ENCODE measurements at regions of chr4 and their contacts with region 1.

Region 1: DNA sequence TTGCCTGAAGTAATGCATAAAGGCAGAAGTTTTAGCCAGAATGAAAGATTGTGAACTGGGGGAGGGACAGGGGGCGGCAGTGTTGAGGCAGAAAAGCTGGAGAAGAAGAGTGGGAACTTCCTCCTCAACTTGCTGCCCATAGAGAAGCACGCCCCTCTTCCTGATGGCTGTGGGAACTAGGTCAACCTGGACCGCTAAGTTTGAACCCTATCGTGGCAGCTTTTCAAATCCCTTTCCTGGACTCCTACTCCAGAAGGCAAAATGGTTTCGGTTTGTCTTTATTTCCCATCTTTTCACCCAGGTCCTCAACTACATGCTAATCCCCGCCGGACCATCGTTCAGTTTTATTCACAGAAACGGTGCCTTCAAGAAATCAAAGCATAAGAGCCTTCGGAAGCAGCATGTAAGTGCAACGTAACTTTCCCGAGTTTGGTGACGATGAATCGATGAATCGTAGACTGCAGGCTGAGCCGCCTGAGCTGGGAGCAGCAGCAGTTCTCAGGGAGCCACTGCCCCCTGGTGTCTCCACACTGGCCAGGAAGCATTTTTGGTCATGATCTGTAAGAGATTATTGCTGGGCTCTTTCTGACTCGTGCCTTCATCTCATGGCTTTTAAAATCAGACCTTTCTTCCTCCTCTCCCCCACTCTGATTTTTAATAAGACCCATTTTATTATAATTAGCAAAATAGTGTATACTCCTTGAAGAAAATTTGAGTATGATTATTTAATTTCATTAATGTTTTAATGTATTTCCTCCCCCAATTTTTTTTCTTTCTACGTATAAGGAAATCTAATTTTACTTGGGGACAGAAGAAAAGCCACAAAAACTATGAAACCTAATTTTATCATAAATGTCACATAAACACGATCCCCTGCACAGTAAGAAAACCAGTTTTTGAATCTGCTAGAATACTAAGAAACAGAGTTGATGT is 21.4 kb downstream of the SPINK2 start:
- DNase-seq: peak; percentile 93
- H3K4me3 ChIP-seq: peak overlapping the region; percentile 46 to 64 (median 56)
- H3K27ac ChIP-seq: peak overlapping the region; percentile 70 to 81 (median 78)
- H3K4me1 ChIP-seq: peaks cover 0 to 21% (median 20%) of the 10 kb centered on the region in 4 donors
- H3K27me3 ChIP-seq: no peaks in the 10 kb centered on the region
- CTCF ChIP-seq: peak; percentile 77 to 92 (median 87)
- EP300 ChIP-seq: no peak
- POLR2A ChIP-seq: no peak

Region 2: DNA sequence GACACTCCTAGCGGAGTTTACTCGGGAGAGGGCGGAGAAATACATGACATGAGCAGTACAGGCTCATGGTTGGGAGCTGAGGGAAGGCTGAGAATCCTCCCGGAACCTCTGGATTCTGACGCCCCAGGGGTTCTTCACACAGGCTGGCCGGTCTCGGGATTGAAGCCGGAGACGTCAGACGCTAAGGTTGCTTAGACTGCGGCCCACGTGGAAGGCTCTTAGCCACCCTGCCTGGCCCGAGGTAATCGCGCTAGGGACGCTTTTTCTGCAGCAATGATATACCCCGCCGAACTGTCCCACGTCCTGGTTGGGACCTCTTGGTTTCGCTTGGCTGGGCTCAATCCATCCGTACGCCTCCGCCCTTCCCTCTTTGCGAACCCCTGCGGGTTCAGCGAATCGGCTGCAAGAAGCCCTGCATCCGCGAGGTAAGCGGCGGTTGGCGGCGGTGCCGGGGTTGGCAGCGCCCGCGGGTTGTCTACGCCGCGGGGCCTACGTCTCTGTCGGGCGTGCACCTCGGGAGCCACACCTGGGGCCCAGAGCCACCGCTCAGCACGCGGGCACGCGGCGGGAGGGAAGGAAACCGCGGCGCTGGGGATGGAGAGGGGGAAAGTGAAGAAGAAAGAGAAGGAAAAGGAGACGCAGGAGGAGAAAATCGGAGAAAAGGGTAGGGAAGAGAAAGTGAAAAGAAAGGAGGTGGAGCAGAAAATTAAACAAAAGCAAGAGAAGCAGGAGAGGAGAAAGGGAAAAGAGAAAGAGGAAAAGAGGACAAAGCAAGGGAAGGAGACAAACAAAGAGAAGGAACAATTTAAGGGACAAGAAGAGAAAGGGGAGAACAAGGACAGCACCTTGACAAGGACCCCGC is 294.6 kb before region 1 on chr4 and contains the start of gene ARL9:
- intact Hi-C with region 1: loop called (anchors 5 kb)
- DNase-seq: peak; percentile 78
- H3K4me3 ChIP-seq: peak within 1 kb of the TSS; percentile 41 to 62 (median 58)
- H3K27ac ChIP-seq: peak within 1 kb of the TSS; percentile 62 to 73 (median 64)
- H3K4me1 ChIP-seq: peaks cover 0 to 18% (median 12%) of the 10 kb centered on the region in 4 donors
- H3K27me3 ChIP-seq: no peaks in the 10 kb centered on the region
- CTCF ChIP-seq: no peak
- EP300 ChIP-seq: no peak
- POLR2A ChIP-seq: no peak
- total RNA-seq, gene ARL9: 0.54 to 1.1 (median 0.66) TPM in 3 of 4 donors, not detected in the other

Region 3: GRCh38 chr4:56575820-56576429 is 224.2 kb before region 1 on chr4:
- intact Hi-C with region 1: loop called (anchors 1 kb)
- DNase-seq: no peak
- H3K4me3 ChIP-seq: no peak overlapping the region
- H3K27ac ChIP-seq: peak overlapping the region in 2 of 4 donors; percentile 43 to 53
- H3K4me1 ChIP-seq: peaks cover 0 to 11% (median 5%) of the 10 kb centered on the region in 4 donors
- H3K27me3 ChIP-seq: no peaks in the 10 kb centered on the region
- CTCF ChIP-seq: peak; percentile 42 to 72 (median 64)
- EP300 ChIP-seq: no peak
- POLR2A ChIP-seq: no peak

Region 4: DNA sequence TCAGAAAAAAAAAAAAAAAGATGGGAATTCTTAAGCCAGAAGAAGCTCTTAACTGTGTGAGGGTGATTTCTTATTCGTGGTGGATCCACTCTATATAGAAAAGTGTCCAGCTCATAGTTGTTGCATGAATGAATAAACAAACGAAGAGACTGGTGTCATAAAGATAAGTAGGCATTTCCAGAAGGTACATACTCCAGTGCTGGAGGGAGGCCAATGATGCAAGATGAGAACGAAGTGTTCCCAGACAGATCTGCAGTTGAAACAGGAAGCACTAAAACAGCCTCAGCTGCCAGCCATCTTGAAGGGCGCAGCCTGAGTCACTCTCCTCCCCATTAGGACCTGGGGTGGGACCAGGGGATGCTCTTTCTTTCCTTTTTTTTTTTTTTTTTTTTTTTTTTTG is 71.6 kb before region 1 on chr4:
- intact Hi-C with region 1: loop called (anchors 2 kb)
- DNase-seq: peak; percentile 96
- H3K4me3 ChIP-seq: no peak overlapping the region
- H3K27ac ChIP-seq: peak overlapping the region; percentile 63 to 79 (median 71)
- H3K4me1 ChIP-seq: peaks cover 0 to 21% (median 12%) of the 10 kb centered on the region in 4 donors
- H3K27me3 ChIP-seq: no peaks in the 10 kb centered on the region
- CTCF ChIP-seq: no peak
- EP300 ChIP-seq: peak; percentile 90 to 99 (median 98)
- POLR2A ChIP-seq: no peak